ENCODE measurements at regions of chr6 and their contacts with region 1.

Region 1: GRCh38 chr6:32589598-32590449 is at the start of gene HLA-DRB1:
- DNase-seq: no peak
- H3K4me3 ChIP-seq: no peak within 1 kb of the TSS
- H3K4me1 ChIP-seq: no peaks in the 10 kb centered on the region
- H3K27me3 ChIP-seq: no peaks in the 10 kb centered on the region

Region 2: DNA sequence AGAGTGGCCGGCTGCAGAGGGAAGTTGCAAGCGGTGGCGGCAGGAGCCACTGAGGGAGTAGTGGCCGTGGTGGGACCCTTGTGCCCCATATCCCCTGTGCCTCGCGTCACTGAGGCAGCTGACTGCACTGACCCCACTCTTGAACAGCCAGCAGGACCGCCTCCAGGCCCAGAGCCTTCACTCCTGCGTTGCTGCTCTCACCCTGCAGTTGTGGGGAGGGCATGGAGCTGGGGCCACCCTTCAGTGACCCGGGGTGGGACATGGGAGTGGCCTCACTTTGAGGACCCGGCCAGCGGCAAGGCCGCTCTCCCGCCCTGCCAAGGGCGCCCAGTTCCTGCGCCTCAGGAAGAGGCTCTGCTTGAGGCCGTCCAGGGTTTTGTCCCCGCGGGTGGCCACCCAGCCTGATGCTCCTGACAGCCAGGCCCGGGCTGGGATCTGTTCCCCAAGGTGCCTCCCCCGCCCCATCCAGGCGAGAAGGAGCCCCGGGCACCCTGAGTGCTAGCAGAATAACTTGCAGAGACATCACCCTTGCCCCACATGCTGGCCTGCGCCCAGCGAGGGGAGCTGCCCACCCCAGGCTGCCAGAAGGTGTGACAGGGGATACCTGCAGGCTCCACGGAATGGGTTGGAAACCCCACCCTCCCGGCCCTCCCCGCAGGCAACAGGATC is 105.7 kb before region 1 on chr6:
- in situ Hi-C with region 1: loop called (anchors 25 kb)
- DNase-seq: no peak
- H3K4me3 ChIP-seq: no peak overlapping the region
- H3K4me1 ChIP-seq: no peaks in the 10 kb centered on the region
- H3K27me3 ChIP-seq: no peaks in the 10 kb centered on the region

Region 3: DNA sequence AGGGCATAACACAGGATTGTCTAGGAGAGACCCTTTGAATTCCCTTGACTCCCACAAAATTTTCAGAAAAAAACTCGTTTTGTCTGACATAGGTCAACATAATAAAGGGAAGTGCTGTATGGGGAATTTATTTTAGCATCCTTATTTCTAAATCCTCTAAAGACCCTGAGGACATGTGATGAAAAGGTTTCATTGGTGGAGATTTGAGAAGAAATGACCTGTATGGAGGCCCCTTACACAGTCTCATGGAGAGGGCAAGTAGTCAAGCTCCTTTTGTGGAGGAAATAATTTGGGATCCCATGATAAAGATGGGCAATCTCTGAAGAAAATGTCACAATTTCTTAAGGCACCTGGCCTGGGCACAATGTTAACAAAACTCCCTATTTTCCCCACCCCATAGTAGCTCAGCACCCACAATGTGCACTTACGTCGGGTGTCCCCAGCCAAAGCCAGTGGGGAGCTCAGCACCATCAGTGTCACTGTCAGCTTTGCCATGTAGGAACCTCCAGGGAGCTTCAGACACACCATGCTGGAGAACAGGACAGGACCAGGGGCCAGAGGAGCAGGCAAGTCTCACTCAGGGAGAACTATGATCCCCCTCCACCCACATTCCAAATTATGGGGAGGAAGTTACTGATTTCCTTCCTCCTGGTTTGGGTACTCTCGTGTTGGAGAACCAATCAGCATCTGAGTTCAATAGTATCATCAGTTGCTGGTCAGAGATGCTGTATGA is 60.0 kb before region 1 on chr6 and contains the start of gene HLA-DRB5:
- in situ Hi-C with region 1: loop called (anchors 5 kb)
- DNase-seq: no peak
- H3K4me3 ChIP-seq: no peak within 1 kb of the TSS
- H3K4me1 ChIP-seq: no peaks in the 10 kb centered on the region
- H3K27me3 ChIP-seq: no peaks in the 10 kb centered on the region

Region 4: DNA sequence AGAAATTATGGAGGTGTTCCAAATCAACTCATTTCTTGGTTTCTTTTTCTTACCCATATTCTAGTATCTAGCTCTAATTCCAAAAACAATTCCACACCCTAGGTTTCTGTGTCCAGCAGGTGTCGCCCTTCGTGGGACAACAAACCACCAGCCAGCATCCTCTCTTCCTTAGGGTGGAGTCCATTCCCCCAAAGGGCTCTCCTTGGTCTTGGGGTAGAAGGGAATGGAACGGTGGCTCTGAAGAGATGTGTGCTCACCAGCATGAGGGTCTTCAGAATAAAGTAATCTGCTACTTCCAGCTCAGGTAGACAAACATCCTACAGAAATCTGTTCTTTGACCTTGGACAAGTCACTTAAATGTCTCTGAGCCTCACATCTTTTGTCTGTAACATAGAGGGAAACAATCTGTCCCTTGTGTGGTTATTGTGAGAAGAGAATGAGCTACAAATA is 343.8 kb after region 1 on chr6:
- in situ Hi-C with region 1: no loop called
- DNase-seq: peak; percentile 53 to 84
- H3K4me3 ChIP-seq: no peak overlapping the region
- H3K4me1 ChIP-seq: no peaks in the 10 kb centered on the region
- H3K27me3 ChIP-seq: peaks cover 62% of the 10 kb centered on the region

Region 5: GRCh38 chr6:33014841-33015634 is 425.2 kb after region 1 on chr6:
- in situ Hi-C with region 1: no loop called
- DNase-seq: peak; percentile 68 to 75
- H3K4me3 ChIP-seq: no peak overlapping the region
- H3K4me1 ChIP-seq: no peaks in the 10 kb centered on the region
- H3K27me3 ChIP-seq: peaks cover 79% of the 10 kb centered on the region